Activated T-helper 1 cell treated with anti-CD3 and anti-CD28 coated beads, Interleukin-12 subunit alpha, Interleukin-12 subunit beta, Interleukin-2, Interleukin-4 antibody, amounts not matched to agents 30 ng/mL and 10 ng/mL and 1 ng/mL, durations not matched to agents 14 hours and 24 hours and 36 hours (primary cell): ENCODE measurements at regions of chr1 and their contacts with region 1.

Region 1: DNA sequence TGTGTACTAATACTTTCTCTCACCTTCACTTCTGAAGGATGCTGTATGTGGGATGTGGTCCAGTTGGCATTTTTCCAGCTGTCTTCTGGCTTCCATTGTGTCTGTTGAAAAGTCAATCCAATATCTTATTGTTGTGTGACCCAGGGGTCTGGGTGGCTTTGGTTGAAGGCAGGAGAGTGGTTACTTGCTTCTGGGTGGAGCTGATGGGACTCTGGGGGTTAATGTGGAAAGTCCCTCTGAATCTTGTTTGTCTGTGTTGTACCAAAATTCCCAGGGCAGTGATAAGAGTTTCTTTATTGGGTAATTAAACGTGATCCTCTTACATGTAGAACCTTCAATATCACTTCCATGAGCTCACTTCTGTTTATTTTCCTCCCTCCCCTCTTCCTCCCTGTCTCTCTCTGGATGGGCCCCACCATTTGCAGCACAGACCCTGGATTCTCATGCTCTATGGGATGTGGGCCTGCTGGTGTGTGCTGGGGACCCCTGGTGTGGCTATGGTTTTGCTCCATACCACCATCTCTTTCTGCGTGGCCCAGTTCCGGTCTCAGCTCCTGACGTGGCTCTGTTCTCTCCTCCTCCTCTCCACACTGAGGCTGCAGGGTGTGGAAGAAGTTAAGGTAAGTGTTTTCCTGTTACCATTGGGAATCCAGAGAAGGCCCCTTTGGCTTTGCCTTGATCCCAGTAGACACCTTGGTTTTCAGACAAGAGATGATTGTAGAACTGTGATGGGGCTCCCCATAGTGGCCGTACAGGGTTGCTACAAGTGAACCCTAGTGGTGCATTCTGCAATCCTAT is 71.5 kb downstream of the HHAT start:
- DNase-seq: peak; percentile 20
- H3K4me3 Mint-ChIP-seq: peak overlapping the region; percentile 34
- H3K27ac Mint-ChIP-seq: peak overlapping the region; percentile 63
- H3K4me1 Mint-ChIP-seq: peaks cover 41% of the 10 kb centered on the region
- H3K27me3 Mint-ChIP-seq: peaks cover 6% of the 10 kb centered on the region

Region 2: DNA sequence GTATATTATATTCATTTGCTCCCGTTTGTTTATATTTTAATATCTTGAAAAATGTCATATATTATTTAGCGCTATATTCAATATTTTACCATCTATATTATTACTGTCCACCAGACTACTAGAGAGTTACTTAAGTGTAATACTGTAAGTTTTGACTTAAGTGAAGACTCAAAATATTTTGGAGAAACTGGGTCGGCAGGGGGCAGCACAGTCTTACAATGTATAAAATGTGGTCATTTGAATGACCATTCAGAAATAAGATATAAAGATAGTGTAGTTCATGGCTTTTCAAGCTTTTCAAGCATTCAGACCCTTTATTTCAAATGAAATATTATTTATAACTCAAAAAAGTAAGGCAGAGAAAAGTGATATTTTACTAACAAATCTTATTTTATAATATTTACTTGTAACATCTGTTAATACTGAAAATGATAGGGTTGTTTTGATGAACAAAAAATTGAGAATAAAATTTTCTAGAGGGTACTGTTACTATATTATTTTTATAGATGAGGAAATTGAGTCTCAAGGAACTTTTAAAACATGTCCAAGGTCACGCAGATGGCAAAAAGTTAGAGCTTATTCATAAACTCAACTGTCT is 256.7 kb before region 1 on chr1:
- intact Hi-C with region 1: loop called (anchors 1 kb)
- DNase-seq: no peak
- H3K4me3 Mint-ChIP-seq: no peak overlapping the region
- H3K27ac Mint-ChIP-seq: no peak overlapping the region
- H3K4me1 Mint-ChIP-seq: no peaks in the 10 kb centered on the region
- H3K27me3 Mint-ChIP-seq: no peaks in the 10 kb centered on the region

Region 3: GRCh38 chr1:210328746-210329503 is 71.3 kb before region 1 on chr1 and contains the start of gene HHAT:
- intact Hi-C with region 1: loop called (anchors 1 kb)
- DNase-seq: peak; percentile 52
- H3K4me3 Mint-ChIP-seq: peak within 1 kb of the TSS; percentile 90
- H3K27ac Mint-ChIP-seq: peak within 1 kb of the TSS; percentile 95
- H3K4me1 Mint-ChIP-seq: peaks cover 42% of the 10 kb centered on the region
- H3K27me3 Mint-ChIP-seq: peaks cover 12% of the 10 kb centered on the region
- total RNA-seq, gene HHAT: 0.67 and 0.73 TPM in 2 replicates

Region 4: GRCh38 chr1:210360852-210361477 is 39.3 kb before region 1 on chr1:
- intact Hi-C with region 1: loop called (anchors 1 kb)
- DNase-seq: no peak
- H3K4me3 Mint-ChIP-seq: no peak overlapping the region
- H3K27ac Mint-ChIP-seq: no peak overlapping the region
- H3K4me1 Mint-ChIP-seq: no peaks in the 10 kb centered on the region
- H3K27me3 Mint-ChIP-seq: peaks cover 4% of the 10 kb centered on the region

Region 5: GRCh38 chr1:210384630-210385029 is 15.6 kb before region 1 on chr1:
- intact Hi-C with region 1: no loop called
- DNase-seq: no peak
- H3K4me3 Mint-ChIP-seq: no peak overlapping the region
- H3K27ac Mint-ChIP-seq: no peak overlapping the region
- H3K4me1 Mint-ChIP-seq: no peaks in the 10 kb centered on the region
- H3K27me3 Mint-ChIP-seq: peaks cover 6% of the 10 kb centered on the region